ENCODE measurements at regions of chr2 and their contacts with region 1.

Region 1: GRCh38 chr2:205700331-205701132 is 18.2 kb downstream of the NRP2 start:
- DNase-seq: no peak
- ATAC-seq: peak; percentile 66
- H3K4me3 Mint-ChIP-seq: peak overlapping the region; percentile 46
- H3K27ac Mint-ChIP-seq: peak overlapping the region; percentile 65
- H3K4me1 Mint-ChIP-seq: peaks cover 39% of the 10 kb centered on the region
- H3K27me3 Mint-ChIP-seq: no peaks in the 10 kb centered on the region
- CTCF ChIP-seq: no peak

Region 2: GRCh38 chr2:205714058-205714776 is 13.7 kb after region 1 on chr2:
- CTCF ChIA-PET with region 1: no interaction called
- POLR2A ChIA-PET with region 1: interaction called, 19 read pairs
- intact Hi-C with region 1: loop called (anchors 1 kb)
- DNase-seq: no peak
- ATAC-seq: peak; percentile 81
- H3K4me3 Mint-ChIP-seq: peak overlapping the region; percentile 37
- H3K27ac Mint-ChIP-seq: peak overlapping the region; percentile 74
- H3K4me1 Mint-ChIP-seq: peaks cover 61% of the 10 kb centered on the region
- H3K27me3 Mint-ChIP-seq: no peaks in the 10 kb centered on the region
- CTCF ChIP-seq: no peak

Region 3: DNA sequence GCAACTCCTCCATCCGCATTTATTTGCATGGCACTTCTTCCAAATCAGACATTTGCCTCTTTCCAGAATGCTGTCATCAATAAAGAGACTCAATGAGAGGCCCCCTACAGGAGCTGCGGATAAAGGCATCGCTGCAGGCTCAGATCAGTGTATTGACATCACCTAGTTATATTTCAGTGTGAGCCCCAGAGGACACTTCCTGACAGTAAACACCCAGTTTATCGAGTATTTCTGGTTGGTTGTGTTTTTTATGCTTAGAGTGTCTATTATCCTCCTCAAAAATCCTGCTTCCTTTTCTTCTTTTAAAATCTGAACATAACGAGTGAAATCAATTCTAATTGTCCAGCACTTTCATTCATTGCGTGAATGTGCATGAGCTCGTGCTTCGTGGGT is 20.5 kb after region 1 on chr2:
- CTCF ChIA-PET with region 1: interaction called, 3 read pairs
- POLR2A ChIA-PET with region 1: interaction called, 19 read pairs
- intact Hi-C with region 1: no loop called
- DNase-seq: no peak
- ATAC-seq: no peak
- H3K4me3 Mint-ChIP-seq: no peak overlapping the region
- H3K27ac Mint-ChIP-seq: no peak overlapping the region
- H3K4me1 Mint-ChIP-seq: peaks cover 27% of the 10 kb centered on the region
- H3K27me3 Mint-ChIP-seq: no peaks in the 10 kb centered on the region
- CTCF ChIP-seq: no peak

Measured in activated B cell treated with CpG ODN at 0.5 μM for 24 hours (primary cell).